ENCODE measurements at regions of chr7 and their contacts with region 1.

Region 1: DNA sequence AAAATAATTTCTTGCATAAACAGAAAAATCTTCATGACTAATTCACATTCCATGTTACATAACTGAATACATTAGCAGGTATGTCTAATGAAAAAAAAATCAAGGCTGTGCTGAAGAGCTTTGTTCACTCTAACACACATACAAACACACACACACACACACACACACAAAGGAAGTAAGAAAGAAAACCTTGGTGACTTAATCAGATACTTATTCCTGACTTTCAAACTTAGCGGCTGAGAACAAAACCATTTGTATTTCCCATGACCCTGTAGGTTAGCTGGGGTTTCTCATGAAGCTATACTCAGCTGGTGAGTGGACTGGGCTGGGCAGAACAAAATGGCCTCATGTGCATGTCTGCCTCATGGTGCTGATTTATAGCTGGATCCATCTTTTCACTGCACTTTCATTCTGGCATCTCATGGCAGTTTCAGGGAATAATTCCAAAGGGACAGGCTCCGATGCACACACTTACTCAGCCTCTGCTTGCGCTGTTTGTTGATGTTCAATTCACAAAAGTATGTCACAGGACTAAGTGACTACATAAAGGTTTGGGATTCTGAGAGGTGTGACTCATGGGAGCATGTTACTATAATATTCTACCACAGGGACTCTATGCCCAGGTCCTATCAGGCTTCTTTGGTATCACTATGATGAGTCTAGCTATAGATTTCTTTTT is 161.2 kb downstream of the PCLO start:
- DNase-seq: no peak
- H3K4me3 ChIP-seq: no peak overlapping the region
- H3K27ac ChIP-seq: no peak overlapping the region
- H3K4me1 ChIP-seq: no peaks in the 10 kb centered on the region
- H3K27me3 ChIP-seq: no peaks in the 10 kb centered on the region
- CTCF ChIP-seq: no peak

Region 2: DNA sequence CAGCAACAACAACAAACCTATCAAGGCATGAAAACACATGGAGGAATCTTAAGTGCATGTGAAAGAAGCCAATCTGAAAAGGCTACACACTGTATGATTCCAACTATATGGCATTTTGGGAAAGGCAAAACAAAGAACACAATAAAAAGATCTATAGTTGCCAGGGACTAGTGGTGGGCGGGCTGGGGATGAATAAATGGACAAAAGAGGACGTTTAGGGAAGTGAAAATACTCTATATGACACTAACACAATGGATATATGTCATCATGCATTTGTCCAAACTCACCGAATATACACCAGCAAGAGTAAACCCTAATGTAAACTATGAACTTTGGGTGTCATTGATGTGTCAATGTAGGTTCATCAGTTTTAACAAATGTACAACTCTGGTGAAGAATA is 558.4 kb after region 1 on chr7:
- intact Hi-C with region 1: loop called (anchors 5 kb)
- DNase-seq: no peak
- H3K4me3 ChIP-seq: no peak overlapping the region
- H3K27ac ChIP-seq: no peak overlapping the region
- H3K4me1 ChIP-seq: no peaks in the 10 kb centered on the region
- H3K27me3 ChIP-seq: no peaks in the 10 kb centered on the region
- CTCF ChIP-seq: no peak